ENCODE measurements at regions of chr2 and their contacts with region 1.

Region 1: DNA sequence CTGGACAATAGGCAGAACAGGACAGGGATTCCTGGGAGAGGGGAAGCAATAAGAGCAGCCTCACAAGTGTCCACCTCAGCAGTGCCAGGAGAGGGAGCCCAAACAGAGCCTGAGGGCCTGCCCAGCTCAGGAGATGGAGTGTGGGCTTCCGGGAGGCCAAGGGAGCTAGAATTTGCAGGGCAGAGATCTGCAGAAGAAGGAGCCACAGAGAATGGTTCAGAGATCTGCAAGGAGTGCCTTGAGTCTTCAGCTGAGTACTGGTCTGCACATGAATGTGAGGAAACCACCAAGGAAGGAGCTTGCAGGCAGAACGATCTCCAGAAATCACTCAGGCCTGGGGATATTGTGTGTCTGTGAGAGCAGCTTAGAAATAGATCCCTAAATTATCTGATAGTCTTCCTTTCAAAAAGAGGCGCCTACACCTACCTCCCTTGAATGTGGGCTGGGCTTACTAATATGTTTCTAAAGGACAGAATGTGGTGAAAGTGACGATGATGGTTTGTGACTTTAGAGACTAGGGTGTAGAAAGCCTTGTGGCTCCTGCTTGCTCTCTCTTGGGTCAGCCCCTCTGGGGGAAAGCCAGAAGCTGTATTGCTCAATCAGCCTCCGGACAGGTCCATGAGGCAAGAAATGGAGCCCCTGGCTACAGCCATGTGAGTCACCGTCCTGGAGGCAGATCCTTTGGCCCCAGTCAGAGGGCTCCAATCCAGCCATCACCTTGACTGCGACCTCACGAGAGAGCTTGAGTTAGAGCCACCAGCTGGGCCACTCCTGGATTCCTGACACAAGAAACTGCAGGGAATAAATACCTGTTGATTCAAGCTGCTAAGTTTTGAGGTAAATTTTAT is 7.6 kb upstream of the LPIN1 start:
- DNase-seq: peak; percentile 64
- H3K4me3 ChIP-seq: no peak overlapping the region
- H3K27ac ChIP-seq: no peak overlapping the region
- H3K4me1 ChIP-seq: peaks cover 12 to 18% of the 10 kb centered on the region in 2 experiments; a peak in 3 of 4 replicates
- H3K27me3 ChIP-seq: no peaks in the 10 kb centered on the region; the same call in 1 of the 2 replicates
- CTCF ChIP-seq: peak; percentile 67
- EP300 ChIP-seq: no peak
- RAD21 ChIP-seq: peak; percentile 73

Region 2: GRCh38 chr2:11726384-11726783 is 12.4 kb before region 1 on chr2:
- CTCF ChIA-PET with region 1: interaction called, 40 read pairs
- POLR2A ChIA-PET with region 1: interaction called, 3 read pairs
- DNase-seq: peak; percentile 78
- H3K4me3 ChIP-seq: no peak overlapping the region
- H3K27ac ChIP-seq: peak overlapping the region in 1 of 2 experiments; percentile 81; a peak in 2 of 4 replicates
- H3K4me1 ChIP-seq: peaks cover 0 to 21% of the 10 kb centered on the region in 2 experiments; a peak in 2 of 4 replicates
- H3K27me3 ChIP-seq: peaks cover 10% of the 10 kb centered on the region; the same call in 1 of the 2 replicates
- CTCF ChIP-seq: no peak
- EP300 ChIP-seq: peak in 1 of 2 experiments; percentile 85; a peak in 2 of 4 replicates
- RAD21 ChIP-seq: peak; percentile 23

Region 3: GRCh38 chr2:11914455-11914854 is 175.6 kb after region 1 on chr2:
- CTCF ChIA-PET with region 1: no interaction called
- POLR2A ChIA-PET with region 1: no interaction called
- DNase-seq: no peak
- H3K4me3 ChIP-seq: no peak overlapping the region
- H3K27ac ChIP-seq: no peak overlapping the region
- H3K4me1 ChIP-seq: no peaks in the 10 kb centered on the region
- H3K27me3 ChIP-seq: no peaks in the 10 kb centered on the region
- CTCF ChIP-seq: no peak
- EP300 ChIP-seq: no peak
- RAD21 ChIP-seq: no peak